AG04449 (cell line): ENCODE measurements at regions of chr12 and their contacts with region 1.

Region 1: DNA sequence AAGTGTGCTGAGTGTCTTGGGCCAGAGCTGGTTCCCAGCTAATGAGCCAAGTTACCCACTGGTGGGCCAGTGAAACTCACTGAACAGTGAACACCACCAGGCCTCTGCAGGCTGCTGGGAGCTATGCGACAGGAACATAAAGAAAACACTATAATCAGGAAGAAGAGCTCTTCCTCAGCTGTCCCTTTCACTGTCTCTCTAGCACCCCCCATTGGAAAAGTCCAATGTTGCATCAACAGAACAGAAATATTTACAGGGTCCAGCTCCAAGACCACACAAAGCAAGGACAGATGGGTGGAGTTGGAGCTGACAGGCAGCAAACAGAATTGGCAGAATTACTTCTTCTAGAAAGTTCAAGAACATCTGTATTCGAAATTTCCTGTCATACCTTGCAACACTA is 903.6 kb upstream of the TMEM132C start:
- DNase-seq: no peak
- H3K4me3 ChIP-seq: no peak overlapping the region
- CTCF ChIP-seq: peak; percentile 22

Region 2: GRCh38 chr12:127381048-127381668 is 17.8 kb after region 1 on chr12:
- CTCF ChIA-PET with region 1: interaction called, 21 read pairs
- POLR2A ChIA-PET with region 1: no interaction called
- DNase-seq: no peak
- H3K4me3 ChIP-seq: peak overlapping the region; percentile 58
- CTCF ChIP-seq: peak; percentile 79